GM12878 (cell line): ENCODE measurements at regions of chr11 and their contacts with region 1.

Region 1: DNA sequence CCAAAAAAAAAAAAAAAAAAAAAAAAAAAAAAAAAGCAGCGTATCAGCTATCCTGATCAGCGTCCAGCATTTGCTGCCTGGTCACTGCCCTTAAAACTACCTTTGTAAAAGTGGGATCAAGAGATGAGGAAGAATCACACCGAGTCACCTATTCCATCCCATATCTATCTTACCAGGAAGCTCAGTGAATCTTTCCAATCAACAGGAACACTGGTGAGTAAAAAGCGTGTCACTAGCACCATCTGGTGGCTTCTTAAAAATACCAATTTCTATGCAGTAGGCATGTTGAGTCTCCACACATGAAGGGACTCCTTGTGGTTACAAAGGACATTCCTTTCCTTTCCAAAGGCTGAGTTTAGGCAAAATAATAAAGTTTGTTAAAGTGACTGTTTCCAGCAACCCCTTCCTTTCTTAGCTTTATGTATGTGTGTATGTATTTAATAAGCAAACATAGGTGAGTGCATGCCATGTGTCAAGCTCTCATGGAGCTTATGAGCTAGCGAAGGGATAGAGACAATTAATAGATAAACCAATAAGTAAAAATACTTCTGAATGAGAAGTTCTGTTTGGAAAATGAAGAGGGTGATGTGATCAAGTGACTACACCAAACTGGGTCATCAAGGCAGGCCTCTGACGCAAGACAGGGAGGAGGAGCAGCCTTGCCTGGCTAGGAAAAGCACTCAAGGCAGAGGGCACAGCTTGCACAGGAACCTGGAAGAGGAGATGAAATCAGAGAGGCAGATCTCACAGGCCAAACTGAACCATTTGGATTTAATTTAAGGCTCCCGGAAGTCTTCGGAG is 13.9 kb upstream of the TP53AIP1 start:
- DNase-seq: peak; percentile 45
- ATAC-seq: peak; percentile 90
- H3K4me3 ChIP-seq: no peak overlapping the region
- H3K27ac ChIP-seq: no peak overlapping the region
- H3K4me1 ChIP-seq: no peaks in the 10 kb centered on the region
- H3K27me3 ChIP-seq: peaks cover 0 to 6% of the 10 kb centered on the region in 2 experiments; a peak in 1 of 4 replicates
- CTCF ChIP-seq: peak; percentile 65 to 79 (median 76)
- EP300 ChIP-seq: no peak
- POLR2A ChIP-seq: no peak
- RAD21 ChIP-seq: peak; percentile 78

Region 2: GRCh38 chr11:128172046-128172878 is 784.3 kb before region 1 on chr11:
- CTCF ChIA-PET with region 1: interaction called, 3 read pairs
- POLR2A ChIA-PET with region 1: no interaction called
- RAD21 ChIA-PET with region 1: no interaction called
- SMC1A ChIA-PET with region 1: interaction called, 7 read pairs
- in situ Hi-C with region 1: no loop called
- intact Hi-C with region 1: loop called (anchors 5 kb)
- DNase-seq: peak; percentile 38
- ATAC-seq: peak; percentile 93
- H3K4me3 ChIP-seq: no peak overlapping the region
- H3K27ac ChIP-seq: no peak overlapping the region
- H3K4me1 ChIP-seq: no peaks in the 10 kb centered on the region
- H3K27me3 ChIP-seq: no peaks in the 10 kb centered on the region; a peak in 2 of 4 replicates
- CTCF ChIP-seq: peak; percentile 68 to 91 (median 72)
- EP300 ChIP-seq: no peak
- POLR2A ChIP-seq: no peak
- RAD21 ChIP-seq: peak; percentile 97

Region 3: GRCh38 chr11:128859563-128860441 is 96.8 kb before region 1 on chr11:
- CTCF ChIA-PET with region 1: interaction called, 11 read pairs
- POLR2A ChIA-PET with region 1: no interaction called
- RAD21 ChIA-PET with region 1: no interaction called
- SMC1A ChIA-PET with region 1: no interaction called
- in situ Hi-C with region 1: no loop called
- intact Hi-C with region 1: no loop called
- DNase-seq: no peak
- ATAC-seq: peak; percentile 99
- H3K4me3 ChIP-seq: no peak overlapping the region
- H3K27ac ChIP-seq: no peak overlapping the region
- H3K4me1 ChIP-seq: no peaks in the 10 kb centered on the region
- H3K27me3 ChIP-seq: peaks cover 0 to 2% of the 10 kb centered on the region in 2 experiments; a peak in 1 of 4 replicates
- CTCF ChIP-seq: peak; percentile 89 to 94 (median 93); a peak in 5 of 6 replicates
- EP300 ChIP-seq: no peak
- POLR2A ChIP-seq: no peak
- RAD21 ChIP-seq: peak; percentile 71

Region 4: DNA sequence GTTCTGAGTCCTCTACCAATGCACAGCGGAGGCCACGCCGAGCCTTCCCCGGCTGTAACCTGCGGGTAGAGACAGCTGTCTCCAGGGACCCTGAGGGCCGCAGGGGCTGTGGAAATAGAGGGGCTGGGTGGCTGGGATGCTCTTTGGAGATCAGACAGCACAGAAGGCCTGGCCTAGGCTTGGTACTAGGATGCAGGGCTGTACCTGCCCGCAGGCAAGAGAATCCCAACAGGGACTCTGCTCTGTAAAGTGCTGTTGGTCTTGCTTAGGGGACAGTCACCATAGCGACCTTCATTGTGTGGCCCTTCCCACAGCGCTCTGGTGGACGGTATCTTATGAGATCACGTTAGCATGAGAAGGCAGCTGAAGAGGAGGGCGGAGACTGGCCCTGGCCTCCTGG is 76.8 kb before region 1 on chr11:
- CTCF ChIA-PET with region 1: interaction called, 480 read pairs
- POLR2A ChIA-PET with region 1: interaction called, 3 read pairs
- RAD21 ChIA-PET with region 1: interaction called, 109 read pairs
- SMC1A ChIA-PET with region 1: interaction called, 249 read pairs
- in situ Hi-C with region 1: loop called (anchors 5 kb)
- intact Hi-C with region 1: loop called (anchors 1 kb)
- DNase-seq: no peak
- ATAC-seq: no peak
- H3K4me3 ChIP-seq: no peak overlapping the region
- H3K27ac ChIP-seq: no peak overlapping the region
- H3K4me1 ChIP-seq: no peaks in the 10 kb centered on the region
- H3K27me3 ChIP-seq: peaks cover 6 to 7% of the 10 kb centered on the region in 2 experiments
- CTCF ChIP-seq: no peak
- EP300 ChIP-seq: no peak
- POLR2A ChIP-seq: no peak
- RAD21 ChIP-seq: no peak

Region 5: DNA sequence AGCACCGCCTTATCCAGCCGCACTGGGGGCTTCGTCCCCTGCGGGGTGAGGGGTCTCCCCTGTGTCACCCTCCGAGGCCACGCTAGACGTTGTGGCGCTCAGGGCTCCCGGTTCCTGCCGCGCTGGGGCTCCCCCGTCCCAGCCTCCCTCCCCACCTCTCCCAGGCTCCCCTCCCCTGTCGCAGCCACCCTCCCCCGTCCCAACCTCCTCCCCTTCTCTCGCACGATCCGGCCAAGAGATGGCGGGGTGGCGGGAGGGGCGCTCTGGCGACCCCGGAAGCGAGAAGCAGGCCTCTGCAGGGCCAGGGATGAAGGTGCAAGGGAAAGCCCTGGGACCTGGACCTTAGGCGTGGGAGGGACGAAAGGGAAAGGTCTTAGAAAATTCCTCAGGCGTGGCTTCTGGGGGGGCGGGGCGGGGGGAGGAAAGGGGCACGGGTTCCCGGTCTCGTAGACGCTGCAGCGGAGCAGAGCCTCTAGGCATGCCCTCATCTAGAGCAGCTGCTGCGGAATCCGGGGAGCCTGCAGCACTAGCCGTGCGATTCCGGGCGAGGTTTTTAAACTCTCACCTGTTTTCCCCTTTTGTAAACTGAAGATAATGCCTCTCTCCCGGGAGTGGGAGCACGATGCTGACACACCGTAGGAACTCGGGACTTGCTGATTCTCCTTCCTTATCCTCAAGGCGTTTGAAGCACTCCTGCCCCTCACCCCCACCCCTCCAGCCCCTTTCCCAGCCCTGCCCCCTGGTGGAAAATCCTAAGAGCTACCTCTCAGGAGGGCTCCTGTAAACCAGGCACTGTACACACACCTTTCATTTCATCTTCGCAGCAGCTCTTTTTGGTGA is 51.0 kb before region 1 on chr11:
- CTCF ChIA-PET with region 1: interaction called, 18 read pairs
- POLR2A ChIA-PET with region 1: no interaction called
- RAD21 ChIA-PET with region 1: interaction called, 4 read pairs
- SMC1A ChIA-PET with region 1: interaction called, 9 read pairs
- in situ Hi-C with region 1: no loop called
- intact Hi-C with region 1: no loop called
- DNase-seq: no peak
- ATAC-seq: peak; percentile 80
- H3K4me3 ChIP-seq: peak overlapping the region; percentile 60
- H3K27ac ChIP-seq: no peak overlapping the region
- H3K4me1 ChIP-seq: no peaks in the 10 kb centered on the region
- H3K27me3 ChIP-seq: peaks cover 0 to 14% of the 10 kb centered on the region in 2 experiments; a peak in 1 of 4 replicates
- CTCF ChIP-seq: peak; percentile 27 to 48 (median 35); a peak in 4 of 6 replicates
- EP300 ChIP-seq: no peak
- POLR2A ChIP-seq: no peak
- RAD21 ChIP-seq: 0 out of 2 replicates have a peak, but pooled peaks have one; percentile 18

Region 6: GRCh38 chr11:128928400-128928799 is 28.2 kb before region 1 on chr11:
- CTCF ChIA-PET with region 1: interaction called, 17 read pairs
- POLR2A ChIA-PET with region 1: no interaction called
- RAD21 ChIA-PET with region 1: interaction called, 5 read pairs
- SMC1A ChIA-PET with region 1: interaction called, 4 read pairs
- in situ Hi-C with region 1: no loop called
- intact Hi-C with region 1: no loop called
- DNase-seq: peak; percentile 65
- ATAC-seq: peak; percentile 96
- H3K4me3 ChIP-seq: no peak overlapping the region
- H3K27ac ChIP-seq: no peak overlapping the region
- H3K4me1 ChIP-seq: peaks cover 5% of the 10 kb centered on the region
- H3K27me3 ChIP-seq: no peaks in the 10 kb centered on the region
- CTCF ChIP-seq: no peak
- EP300 ChIP-seq: no peak
- POLR2A ChIP-seq: no peak
- RAD21 ChIP-seq: no peak

Region 7: DNA sequence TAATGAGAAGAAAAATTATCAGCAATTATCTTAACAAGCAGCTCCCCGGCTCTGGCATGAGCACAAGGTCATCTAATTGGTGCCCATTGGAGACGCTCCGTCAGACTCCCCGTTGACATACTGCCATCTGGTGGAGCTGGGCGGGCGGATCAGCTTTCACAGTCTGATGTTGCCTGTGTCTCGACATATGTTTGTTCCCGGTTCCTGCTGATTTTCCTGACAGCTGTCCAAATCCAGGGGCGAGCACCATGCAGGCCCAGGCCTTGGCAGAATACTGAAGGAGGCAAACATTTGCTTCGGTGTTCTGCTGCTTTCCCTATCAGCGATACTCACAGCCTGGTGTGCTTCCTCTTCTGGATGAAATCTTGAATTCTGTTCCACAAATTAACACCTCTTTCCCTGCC is 375.3 kb after region 1 on chr11:
- CTCF ChIA-PET with region 1: no interaction called
- POLR2A ChIA-PET with region 1: no interaction called
- RAD21 ChIA-PET with region 1: interaction called, 4 read pairs
- SMC1A ChIA-PET with region 1: interaction called, 3 read pairs
- in situ Hi-C with region 1: no loop called
- intact Hi-C with region 1: loop called (anchors 5 kb)
- DNase-seq: peak; percentile 11
- ATAC-seq: peak; percentile 99
- H3K4me3 ChIP-seq: no peak overlapping the region
- H3K27ac ChIP-seq: no peak overlapping the region
- H3K4me1 ChIP-seq: no peaks in the 10 kb centered on the region
- H3K27me3 ChIP-seq: no peaks in the 10 kb centered on the region
- CTCF ChIP-seq: peak; percentile 77 to 88 (median 86)
- EP300 ChIP-seq: no peak
- POLR2A ChIP-seq: no peak
- RAD21 ChIP-seq: peak; percentile 72